Body of pancreas (tissue), 4 donors: ENCODE measurements at regions of chr5 and their contacts with region 1.

Region 1: DNA sequence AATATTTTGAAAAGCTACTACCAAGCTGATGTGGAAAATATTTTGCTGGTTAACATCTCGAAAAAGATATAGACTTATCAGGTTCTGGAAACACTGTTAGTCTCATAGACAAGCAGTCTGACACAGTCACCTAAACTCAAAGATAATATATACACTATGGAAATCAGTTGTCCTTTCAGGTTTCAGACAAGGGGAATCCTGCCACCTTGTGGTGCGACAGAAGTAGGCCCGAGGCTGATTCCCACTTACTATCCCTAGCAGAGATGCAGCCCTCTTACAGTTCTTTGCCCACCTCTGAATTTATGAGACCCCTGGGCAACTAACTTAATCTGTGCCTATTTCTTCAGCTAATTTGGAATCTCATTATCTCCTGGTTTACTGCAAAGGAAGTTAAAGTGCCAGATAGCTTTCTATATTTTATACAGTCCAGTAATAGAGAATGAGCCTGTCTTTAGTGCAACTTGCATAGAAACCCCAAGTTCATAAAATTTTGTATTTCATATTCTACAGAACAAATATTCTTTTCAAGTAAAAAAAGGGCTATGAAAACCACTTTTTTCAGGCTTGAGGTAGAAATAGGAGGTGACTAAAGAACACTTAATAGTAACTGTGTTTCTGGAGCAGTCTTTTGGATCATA is 16.9 kb downstream of the RAD1 start:
- DNase-seq: peak; percentile 71 to 78 (median 74)
- ATAC-seq: peak; percentile 94
- H3K4me3 ChIP-seq: no peak overlapping the region
- H3K27ac ChIP-seq: no peak overlapping the region
- H3K4me1 ChIP-seq: no peaks in the 10 kb centered on the region
- H3K27me3 ChIP-seq: no peaks in the 10 kb centered on the region
- CTCF ChIP-seq: peak; percentile 81 to 90 (median 84)
- POLR2A ChIP-seq: no peak

Region 2: DNA sequence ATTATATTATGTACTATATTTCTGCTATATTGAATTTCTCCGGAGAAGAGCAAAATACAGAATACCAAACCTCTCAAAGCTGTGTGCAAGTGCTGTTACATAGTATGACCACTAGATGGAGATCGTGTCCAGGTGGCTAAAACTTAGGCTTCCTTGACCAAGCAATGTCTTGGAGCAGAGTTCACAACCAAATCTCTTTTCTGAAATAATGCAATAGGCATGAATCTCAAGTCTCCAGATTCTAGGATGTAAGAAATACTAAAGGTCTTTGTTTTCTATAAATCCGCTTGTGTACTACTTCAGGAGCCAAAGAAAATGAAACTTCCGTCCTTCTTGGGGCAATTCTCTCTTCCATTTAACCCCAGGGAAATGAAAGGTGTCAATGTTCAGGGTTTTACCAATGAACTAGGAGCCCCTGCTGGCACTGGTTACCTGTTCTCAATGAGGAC is 423.8 kb before region 1 on chr5:
- intact Hi-C with region 1: loop called (anchors 5 kb)
- DNase-seq: peak in 3 of 4 donors; percentile 34 to 47 (median 42)
- ATAC-seq: peak; percentile 95
- H3K4me3 ChIP-seq: no peak overlapping the region
- H3K27ac ChIP-seq: no peak overlapping the region
- H3K4me1 ChIP-seq: peaks cover 15% of the 10 kb centered on the region
- H3K27me3 ChIP-seq: no peaks in the 10 kb centered on the region
- CTCF ChIP-seq: peak; percentile 90 to 98 (median 95)
- POLR2A ChIP-seq: no peak

Region 3: GRCh38 chr5:34522599-34523386 is 375.6 kb before region 1 on chr5:
- intact Hi-C with region 1: loop called (anchors 5 kb)
- DNase-seq: peak; percentile 77 to 87 (median 84)
- ATAC-seq: peak; percentile 93
- H3K4me3 ChIP-seq: no peak overlapping the region
- H3K27ac ChIP-seq: no peak overlapping the region
- H3K4me1 ChIP-seq: no peaks in the 10 kb centered on the region
- H3K27me3 ChIP-seq: no peaks in the 10 kb centered on the region
- CTCF ChIP-seq: peak; percentile 54 to 82 (median 77)
- POLR2A ChIP-seq: no peak

Region 4: DNA sequence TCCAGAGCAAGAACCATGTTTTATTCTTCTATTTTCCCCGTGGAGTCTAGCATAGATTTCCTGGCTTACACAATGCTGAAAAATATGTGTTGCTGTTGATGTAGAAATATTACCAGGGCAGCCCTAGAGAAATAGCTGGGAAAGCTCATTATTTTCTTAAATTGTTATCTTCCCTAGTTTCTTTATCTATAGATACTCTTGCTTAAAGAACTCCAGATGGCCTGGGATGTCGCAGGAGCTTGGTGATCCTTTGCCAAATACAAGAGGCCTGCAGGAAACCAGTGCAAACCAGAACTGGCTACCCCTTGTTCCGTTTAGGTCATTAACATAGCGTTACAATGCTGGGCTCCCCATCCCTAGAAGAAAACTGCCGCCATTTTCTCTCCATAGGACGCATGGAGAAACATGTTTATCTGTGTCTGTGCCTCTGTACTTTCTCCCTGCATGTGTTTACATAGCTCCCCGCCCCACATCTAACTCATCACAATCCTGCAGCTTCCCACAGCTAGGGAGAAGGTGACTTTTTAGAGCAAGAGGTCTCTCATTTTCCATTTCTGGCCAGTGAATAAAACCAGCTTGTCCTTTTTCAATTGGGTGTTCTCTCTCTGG is 325.5 kb after region 1 on chr5:
- intact Hi-C with region 1: no loop called
- DNase-seq: no peak
- ATAC-seq: no peak
- H3K4me3 ChIP-seq: no peak overlapping the region
- H3K27ac ChIP-seq: no peak overlapping the region
- H3K4me1 ChIP-seq: peaks cover 50% of the 10 kb centered on the region
- H3K27me3 ChIP-seq: no peaks in the 10 kb centered on the region
- CTCF ChIP-seq: no peak
- POLR2A ChIP-seq: no peak

Region 5: GRCh38 chr5:35436410-35437057 is 538.2 kb after region 1 on chr5:
- intact Hi-C with region 1: no loop called
- DNase-seq: peak; percentile 18 to 59 (median 36)
- ATAC-seq: peak; percentile 80
- H3K4me3 ChIP-seq: no peak overlapping the region
- H3K27ac ChIP-seq: no peak overlapping the region
- H3K4me1 ChIP-seq: no peaks in the 10 kb centered on the region
- H3K27me3 ChIP-seq: no peaks in the 10 kb centered on the region
- CTCF ChIP-seq: peak; percentile 32 to 69 (median 66)
- POLR2A ChIP-seq: no peak